ENCODE measurements at regions of chr12 and their contacts with region 1.

Region 1: GRCh38 chr12:57462251-57462911 is 2.8 kb downstream of the GLI1 start:
- DNase-seq: peak; percentile 90
- H3K4me3 ChIP-seq: peak overlapping the region; percentile 46 to 53 (median 52)
- H3K27ac ChIP-seq: no peak overlapping the region
- H3K4me1 ChIP-seq: peaks cover 21% of the 10 kb centered on the region
- H3K27me3 ChIP-seq: no peaks in the 10 kb centered on the region
- CTCF ChIP-seq: peak; percentile 97 to 98

Region 2: GRCh38 chr12:57268264-57268663 is 194.1 kb before region 1 on chr12:
- CTCF ChIA-PET with region 1: no interaction called
- dilution Hi-C with region 1: no loop called
- in situ Hi-C with region 1: loop called in 1 of 2 experiments (anchors 10 kb)
- intact Hi-C with region 1: no loop called
- DNase-seq: peak; percentile 40
- H3K4me3 ChIP-seq: no peak overlapping the region
- H3K27ac ChIP-seq: no peak overlapping the region
- H3K4me1 ChIP-seq: no peaks in the 10 kb centered on the region
- H3K27me3 ChIP-seq: no peaks in the 10 kb centered on the region
- CTCF ChIP-seq: no peak

Region 3: DNA sequence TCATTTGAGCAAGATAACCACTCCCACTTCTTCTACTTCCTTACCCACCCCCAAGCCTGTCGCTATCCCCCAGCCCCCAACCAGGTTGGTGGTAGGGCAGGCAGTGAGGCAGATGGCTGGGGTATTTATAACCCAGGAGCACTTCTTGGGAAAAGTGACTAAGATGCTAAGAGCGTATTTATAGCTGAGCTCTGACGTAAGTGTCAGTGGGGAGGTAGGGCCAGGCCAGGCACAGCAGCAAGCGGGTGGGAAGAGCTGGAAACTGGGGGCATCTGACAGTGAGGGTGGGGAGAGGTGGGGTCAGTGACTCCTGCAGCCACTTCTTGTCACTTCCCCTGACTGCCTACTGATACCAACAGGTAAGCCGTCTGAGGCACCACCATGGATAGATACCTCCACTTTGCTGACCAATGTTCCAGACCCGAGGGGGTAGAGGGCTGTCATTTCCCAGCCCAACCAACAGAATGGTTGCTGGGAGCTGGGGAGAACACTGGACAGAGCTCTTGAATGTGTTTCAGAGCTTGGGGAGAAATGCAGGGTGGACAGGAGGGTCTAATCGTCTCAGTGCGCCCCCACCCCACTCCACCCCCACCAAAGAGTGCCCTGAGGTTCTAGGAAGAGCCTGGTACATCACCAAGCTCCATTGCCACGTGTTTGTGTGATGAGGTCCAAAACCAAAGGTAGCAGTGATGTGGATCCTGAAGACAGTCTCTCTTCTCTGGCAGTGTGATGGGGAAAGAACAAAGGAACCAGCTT is 10.0 kb before region 1 on chr12:
- CTCF ChIA-PET with region 1: no interaction called
- dilution Hi-C with region 1: no loop called
- in situ Hi-C with region 1: no loop called
- intact Hi-C with region 1: no loop called
- DNase-seq: no peak
- H3K4me3 ChIP-seq: no peak overlapping the region
- H3K27ac ChIP-seq: no peak overlapping the region
- H3K4me1 ChIP-seq: peaks cover 10% of the 10 kb centered on the region
- H3K27me3 ChIP-seq: no peaks in the 10 kb centered on the region
- CTCF ChIP-seq: no peak

Region 4: GRCh38 chr12:57487597-57488401 is 25.4 kb after region 1 on chr12 and contains the start of gene MARS1:
- CTCF ChIA-PET with region 1: no interaction called
- dilution Hi-C with region 1: no loop called
- in situ Hi-C with region 1: no loop called
- intact Hi-C with region 1: loop called (anchors 1 kb)
- DNase-seq: peak; percentile 97
- H3K4me3 ChIP-seq: peak within 1 kb of the TSS; percentile 84 to 98 (median 95)
- H3K27ac ChIP-seq: peak within 1 kb of the TSS; percentile 78
- H3K4me1 ChIP-seq: peaks cover 10% of the 10 kb centered on the region
- H3K27me3 ChIP-seq: no peaks in the 10 kb centered on the region
- CTCF ChIP-seq: peak in 1 of 2 donors; percentile 5
- total RNA-seq, gene MARS1: 240 to 460 TPM

Region 5: DNA sequence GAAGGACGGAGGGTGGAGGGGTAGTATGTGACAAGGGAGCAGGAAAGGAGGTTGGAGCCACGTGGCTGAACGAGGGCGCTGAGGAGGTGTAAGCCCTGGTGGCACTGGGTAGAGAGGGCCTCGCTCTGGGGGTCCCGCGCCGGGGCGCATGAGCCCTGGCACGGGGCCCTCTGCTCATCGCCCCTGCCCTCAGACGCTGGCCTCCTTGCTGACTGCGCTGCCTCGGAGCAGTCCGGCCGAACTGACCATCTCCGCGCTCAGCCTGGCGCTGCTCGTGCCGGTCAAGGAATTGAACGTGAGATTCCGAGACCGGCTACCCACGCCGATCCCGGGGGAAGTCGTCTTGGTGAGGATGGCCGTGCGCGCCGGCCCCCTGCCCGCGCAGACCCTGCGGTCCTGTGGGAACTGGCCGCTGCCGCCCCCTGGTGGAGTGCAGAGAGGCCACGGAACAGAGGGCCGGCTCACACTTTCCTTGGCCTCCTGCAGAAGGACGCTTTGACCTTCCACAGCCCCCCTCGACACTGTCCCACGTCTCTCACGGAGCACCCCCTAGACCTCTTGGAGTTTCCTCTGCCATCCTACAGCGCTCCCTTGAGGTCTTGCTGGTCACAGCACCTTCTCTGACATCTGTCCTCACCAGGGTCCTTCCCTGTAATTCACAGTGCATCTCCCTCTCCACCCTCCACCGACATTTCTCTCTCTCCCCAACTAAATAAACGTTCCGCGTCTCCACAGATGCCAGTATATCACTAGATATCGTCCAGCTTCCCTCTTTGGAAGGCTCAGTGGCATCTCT is 159.3 kb after region 1 on chr12:
- CTCF ChIA-PET with region 1: no interaction called
- dilution Hi-C with region 1: no loop called
- in situ Hi-C with region 1: no loop called
- intact Hi-C with region 1: loop called (anchors 2 kb)
- DNase-seq: no peak
- H3K4me3 ChIP-seq: peak overlapping the region; percentile 4 to 44 (median 37)
- H3K27ac ChIP-seq: no peak overlapping the region
- H3K4me1 ChIP-seq: peaks cover 7% of the 10 kb centered on the region
- H3K27me3 ChIP-seq: peaks cover 11% of the 10 kb centered on the region
- CTCF ChIP-seq: peak; percentile 79 to 92

Measured in mammary epithelial cell (primary cell).